GM13977 (cell line): ENCODE measurements at regions of chr11 and their contacts with region 1.

Region 1: GRCh38 chr11:48109046-48109666 is 107.5 kb upstream of the OR4B1 start:
- DNase-seq: no peak
- CTCF ChIP-seq: peak; percentile 33

Region 2: DNA sequence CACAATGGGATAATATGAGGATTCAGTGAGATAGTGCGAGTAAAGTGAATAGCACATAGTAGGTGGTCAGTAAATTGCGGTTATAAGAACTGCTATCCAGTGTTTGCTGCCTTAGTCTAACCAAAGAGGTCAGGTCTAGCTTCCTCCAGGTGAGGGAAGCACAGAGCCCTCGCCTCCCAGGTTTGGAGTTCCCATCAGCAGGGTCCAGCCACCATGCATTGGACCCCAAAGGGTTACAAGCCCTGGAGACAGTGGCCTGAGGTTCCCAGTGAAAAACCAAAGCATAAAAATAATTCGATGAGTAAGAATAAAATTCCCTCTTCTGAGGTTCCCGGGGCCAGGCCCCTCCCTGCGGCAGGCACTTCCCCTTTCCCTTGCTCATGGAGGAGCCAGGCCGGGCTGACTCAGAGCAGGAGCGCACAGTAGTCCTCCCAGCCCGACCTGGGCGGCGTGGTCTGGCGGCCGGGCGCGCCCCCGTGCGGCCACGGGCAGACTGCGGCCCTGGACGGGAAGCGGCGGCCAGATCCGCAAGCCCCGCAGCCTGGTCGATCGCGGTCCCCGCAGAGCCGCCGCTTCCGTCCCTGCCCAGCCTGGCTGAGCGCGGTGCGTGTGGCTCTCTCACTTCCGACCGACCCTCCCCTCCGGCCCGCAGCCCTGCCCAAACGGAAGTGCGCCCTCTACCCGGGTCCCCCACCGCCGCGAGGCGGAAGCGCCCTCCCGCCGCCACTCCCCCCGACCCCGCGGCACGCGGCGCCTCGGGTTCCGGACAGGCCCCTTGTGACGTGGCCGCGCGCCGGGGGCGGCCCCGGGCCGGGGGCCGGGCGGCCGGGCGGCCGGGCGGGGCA is 701.2 kb before region 1 on chr11 and contains the start of gene SLC39A13:
- in situ Hi-C with region 1: loop called (anchors 25 kb)
- DNase-seq: peak; percentile 99
- CTCF ChIP-seq: peak; percentile 97

Region 3: GRCh38 chr11:47523468-47524225 is 585.5 kb before region 1 on chr11:
- in situ Hi-C with region 1: loop called (anchors 25 kb)
- DNase-seq: peak; percentile 45
- CTCF ChIP-seq: no peak

Region 4: GRCh38 chr11:47672283-47672730 is 436.8 kb before region 1 on chr11:
- in situ Hi-C with region 1: no loop called
- DNase-seq: no peak
- CTCF ChIP-seq: no peak

Region 5: DNA sequence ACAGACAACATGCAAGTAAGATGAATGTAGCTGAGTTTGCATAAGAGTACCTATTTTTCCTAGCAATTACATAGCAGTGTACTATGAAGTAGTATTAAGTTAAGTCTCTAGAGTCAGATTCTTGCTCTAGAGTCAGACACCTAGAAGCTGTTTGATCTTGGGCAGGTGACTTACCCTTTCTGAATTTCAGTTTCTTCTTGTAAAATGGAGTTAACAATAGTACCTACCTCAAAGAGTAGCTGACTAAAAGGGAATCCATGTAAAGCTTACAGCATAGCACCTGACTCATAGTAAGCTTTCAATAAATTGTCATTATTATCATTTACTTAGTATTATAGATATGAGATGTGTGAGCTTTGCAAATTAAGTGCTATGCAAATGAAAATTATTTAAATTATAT is 176.6 kb before region 1 on chr11:
- in situ Hi-C with region 1: loop called (anchors 10 kb)
- DNase-seq: no peak
- CTCF ChIP-seq: no peak